ENCODE measurements at regions of chr11 and their contacts with region 1.

Region 1: GRCh38 chr11:65615229-65615941 is at the start of gene PCNX3:
- DNase-seq: peak; percentile 96
- ATAC-seq: peak; percentile 90
- H3K4me3 Mint-ChIP-seq: peak within 1 kb of the TSS; percentile 97
- H3K27ac Mint-ChIP-seq: peak within 1 kb of the TSS; percentile 96
- H3K4me1 Mint-ChIP-seq: peaks cover 58% of the 10 kb centered on the region
- H3K27me3 Mint-ChIP-seq: no peaks in the 10 kb centered on the region
- CTCF ChIP-seq: no peak
- total RNA-seq, gene PCNX3: 45.3 and 51.4 TPM in 2 replicates

Region 2: DNA sequence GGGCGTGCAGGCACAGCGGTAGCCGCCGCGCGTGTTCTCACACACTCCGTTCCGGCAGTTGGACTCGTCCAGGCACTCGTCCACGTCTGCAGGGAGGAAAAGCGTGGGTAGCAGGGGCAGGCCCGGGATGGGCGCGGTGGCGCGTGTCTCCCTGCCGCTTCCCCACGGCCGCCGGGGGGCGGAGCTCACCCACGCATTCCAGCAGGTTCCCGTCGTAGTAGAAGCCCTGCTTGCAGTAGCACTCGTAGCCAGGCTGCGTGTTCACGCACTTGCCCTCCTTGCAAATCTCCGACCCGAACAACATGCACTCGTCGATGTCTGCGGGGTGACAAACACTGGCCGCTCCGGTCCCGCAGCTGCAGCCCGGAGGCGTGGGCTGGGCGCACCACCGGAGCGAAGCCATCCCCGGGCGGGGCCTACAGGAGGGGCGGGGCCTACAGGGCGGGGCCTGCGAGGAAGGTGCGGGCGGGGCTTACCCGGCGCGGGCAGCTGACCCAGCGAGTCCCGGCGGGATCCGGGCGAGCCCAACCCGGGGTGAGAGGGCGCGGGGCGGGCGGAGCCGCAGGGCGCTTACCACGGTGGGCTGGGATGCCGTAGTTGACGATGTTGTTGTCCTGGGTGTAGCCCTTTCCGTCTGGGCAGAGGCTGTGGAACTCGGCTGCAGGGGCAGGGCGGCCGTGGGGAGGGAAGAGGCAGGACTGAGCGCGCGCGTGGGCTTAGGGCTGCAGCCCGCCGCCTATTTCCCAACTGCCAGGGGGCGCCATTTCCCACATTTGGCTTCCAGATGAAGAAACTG is 74.9 kb before region 1 on chr11:
- CTCF ChIA-PET with region 1: interaction called, 14 read pairs
- POLR2A ChIA-PET with region 1: interaction called, 11 read pairs
- intact Hi-C with region 1: loop called (anchors 1 kb)
- DNase-seq: peak; percentile 88
- ATAC-seq: peak; percentile 88
- H3K4me3 Mint-ChIP-seq: peak overlapping the region; percentile 88
- H3K27ac Mint-ChIP-seq: peak overlapping the region; percentile 86
- H3K4me1 Mint-ChIP-seq: peaks cover 22% of the 10 kb centered on the region
- H3K27me3 Mint-ChIP-seq: no peaks in the 10 kb centered on the region
- CTCF ChIP-seq: no peak

Region 3: DNA sequence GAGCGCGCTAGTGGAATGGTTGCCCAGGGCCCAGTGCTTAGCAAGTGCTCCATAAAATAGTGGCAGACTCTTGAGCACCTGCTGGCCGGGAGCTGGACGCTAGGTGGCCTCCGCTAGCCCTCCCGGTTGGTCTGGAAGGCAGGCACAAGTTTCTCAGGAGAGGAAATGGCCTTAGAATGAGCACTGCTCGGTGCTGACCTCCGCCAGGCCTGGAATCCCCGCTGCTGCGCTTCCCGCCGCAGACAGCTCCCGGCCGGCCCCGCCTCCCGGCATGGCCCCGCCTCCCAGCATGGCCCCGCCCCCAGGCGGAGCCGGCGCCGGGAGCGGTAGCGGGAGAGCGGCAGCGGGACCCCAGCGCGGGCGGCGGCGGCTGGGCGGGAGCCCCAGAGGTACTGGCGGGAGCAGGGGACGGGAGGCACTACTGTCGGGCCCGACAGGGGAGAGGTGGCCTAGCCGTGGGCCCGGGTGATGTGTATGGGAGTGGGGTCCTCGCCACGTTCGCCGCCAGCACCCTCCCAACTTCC is 22.5 kb after region 1 on chr11 and contains the start of gene SIPA1:
- CTCF ChIA-PET with region 1: interaction called, 3 read pairs
- POLR2A ChIA-PET with region 1: interaction called, 108 read pairs
- intact Hi-C with region 1: loop called (anchors 1 kb)
- DNase-seq: peak; percentile 86
- ATAC-seq: peak; percentile 35
- H3K4me3 Mint-ChIP-seq: peak within 1 kb of the TSS; percentile 94
- H3K27ac Mint-ChIP-seq: peak within 1 kb of the TSS; percentile 96
- H3K4me1 Mint-ChIP-seq: peaks cover 51% of the 10 kb centered on the region
- H3K27me3 Mint-ChIP-seq: no peaks in the 10 kb centered on the region
- CTCF ChIP-seq: no peak
- total RNA-seq, gene SIPA1: 236 and 252 TPM in 2 replicates

Region 4: DNA sequence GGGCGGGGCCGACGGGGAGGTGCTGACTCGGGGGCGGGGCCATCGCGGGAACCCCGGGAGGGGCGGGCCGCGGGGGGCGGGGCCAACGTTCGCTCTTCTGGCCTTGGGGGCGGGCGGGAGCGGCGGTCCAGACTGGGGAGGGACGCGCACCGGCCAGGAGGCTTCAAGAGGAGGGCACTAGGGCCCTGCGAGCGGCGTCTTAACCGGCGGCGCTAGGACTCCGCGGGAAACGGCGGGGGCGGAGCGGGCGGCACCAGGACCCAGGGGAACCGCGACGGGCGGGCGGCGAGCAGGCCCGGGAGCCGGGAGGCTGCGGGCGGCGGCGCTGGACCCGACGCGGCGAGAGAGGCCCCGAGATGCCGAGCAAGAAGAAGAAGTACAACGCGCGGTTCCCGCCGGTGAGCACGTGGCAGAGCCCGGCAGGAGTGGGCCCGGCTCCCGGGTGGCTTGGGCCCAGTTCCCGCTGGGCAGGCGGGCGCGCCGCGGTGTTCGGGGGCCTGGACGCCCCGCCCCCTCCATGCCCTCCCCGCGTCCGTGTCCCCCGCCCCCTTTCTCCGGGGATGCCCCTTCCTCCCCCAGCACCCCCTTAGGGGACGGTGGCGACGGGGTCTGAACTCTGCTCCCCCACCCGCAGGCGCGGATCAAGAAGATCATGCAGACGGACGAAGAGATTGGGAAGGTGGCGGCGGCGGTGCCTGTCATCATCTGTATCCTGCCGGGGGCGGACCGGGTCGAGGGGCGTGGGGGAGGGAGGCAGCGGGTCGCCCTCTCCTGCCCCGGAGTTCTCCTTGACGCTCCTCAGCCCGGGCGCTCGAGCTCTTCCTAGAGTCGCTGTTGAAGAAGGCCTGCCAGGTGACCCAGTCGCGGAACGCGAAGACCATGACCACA is 304.0 kb after region 1 on chr11 and contains the start of gene DRAP1:
- CTCF ChIA-PET with region 1: no interaction called
- POLR2A ChIA-PET with region 1: no interaction called
- intact Hi-C with region 1: loop called (anchors 1 kb)
- DNase-seq: peak; percentile 95
- ATAC-seq: peak; percentile 87
- H3K4me3 Mint-ChIP-seq: peak within 1 kb of the TSS; percentile 93
- H3K27ac Mint-ChIP-seq: peak within 1 kb of the TSS; percentile 81
- H3K4me1 Mint-ChIP-seq: peaks cover 53% of the 10 kb centered on the region
- H3K27me3 Mint-ChIP-seq: no peaks in the 10 kb centered on the region
- CTCF ChIP-seq: no peak
- total RNA-seq, gene DRAP1: 64.7 and 75.8 TPM in 2 replicates

Region 5: DNA sequence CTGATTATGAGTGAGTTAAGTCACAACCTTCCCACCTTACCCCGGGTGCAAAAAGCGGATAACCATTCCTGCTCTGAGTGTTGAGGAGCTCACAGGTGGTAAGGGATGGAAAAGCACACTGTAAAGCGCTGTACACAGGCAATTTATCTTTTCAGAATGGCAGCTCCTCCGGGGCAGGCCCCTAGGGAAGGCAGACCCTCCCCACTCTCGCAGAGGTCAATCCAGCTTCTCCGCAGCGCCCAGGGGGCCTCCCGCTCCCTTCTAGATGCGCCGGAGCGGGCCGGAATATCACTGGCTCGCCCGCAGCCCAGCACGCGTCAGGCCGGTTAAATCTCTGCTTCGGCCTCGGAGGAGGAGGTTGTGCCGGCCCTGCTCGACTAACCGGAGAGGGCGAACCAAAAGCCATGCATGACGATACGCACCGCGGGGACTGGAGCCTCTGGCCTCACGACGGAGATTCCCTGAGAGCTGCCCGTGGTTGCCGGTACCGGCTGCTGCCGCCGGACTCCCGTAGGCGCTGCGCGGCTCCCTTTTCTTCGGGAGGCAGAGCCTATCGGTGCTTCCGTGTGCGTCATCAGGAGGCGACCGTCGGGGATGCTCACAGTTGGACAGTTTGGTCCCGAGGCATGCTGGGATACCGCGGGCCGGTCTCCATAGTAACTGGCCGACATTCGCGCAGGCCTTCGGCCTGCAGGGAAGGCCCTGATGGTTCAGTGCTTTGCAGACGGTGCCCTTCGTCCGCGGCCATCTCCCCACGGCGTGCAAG is 729.3 kb after region 1 on chr11 and contains the start of gene BRMS1:
- CTCF ChIA-PET with region 1: no interaction called
- POLR2A ChIA-PET with region 1: no interaction called
- intact Hi-C with region 1: loop called (anchors 5 kb)
- DNase-seq: peak; percentile 93
- ATAC-seq: peak; percentile 82
- H3K4me3 Mint-ChIP-seq: peak within 1 kb of the TSS; percentile 96
- H3K27ac Mint-ChIP-seq: peak within 1 kb of the TSS; percentile 93
- H3K4me1 Mint-ChIP-seq: peaks cover 45% of the 10 kb centered on the region
- H3K27me3 Mint-ChIP-seq: peaks cover 2% of the 10 kb centered on the region
- CTCF ChIP-seq: no peak
- total RNA-seq, gene BRMS1: 56.9 and 59.2 TPM in 2 replicates

Measured in activated B cell treated with CpG ODN at 0.5 μM for 24 hours (primary cell).